OCI-LY7 (cell line): ENCODE measurements at regions of chrX and their contacts with region 1.

Region 1: GRCh38 chrX:76893930-76894329 is 466.4 kb downstream of the MAGEE1 start:
- DNase-seq: peak; percentile 1
- H3K4me3 ChIP-seq: no peak overlapping the region
- H3K27ac ChIP-seq: no peak overlapping the region
- H3K4me1 ChIP-seq: peaks cover 20% of the 10 kb centered on the region
- CTCF ChIP-seq: peak; percentile 34; the same call in 1 of the 2 replicates

Region 2: DNA sequence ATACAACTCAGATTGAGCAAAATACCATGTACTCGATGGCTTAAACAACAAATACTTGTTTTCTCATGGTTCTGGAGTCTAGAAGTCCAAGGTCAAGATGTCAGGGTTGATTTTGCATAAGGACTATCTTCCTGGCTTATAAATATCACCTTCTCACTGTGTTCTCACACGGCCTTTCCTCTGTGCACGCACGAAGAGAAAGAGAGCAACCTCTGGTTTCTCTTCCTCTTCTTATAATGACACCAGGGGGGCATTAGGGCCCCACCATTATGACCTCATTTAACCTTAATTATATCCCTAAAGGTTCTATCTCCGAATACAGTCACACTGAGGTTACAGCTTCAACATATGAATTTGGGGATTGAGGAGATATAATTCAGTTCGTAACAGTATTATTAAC is 37.6 kb after region 1 on chrX:
- CTCF ChIA-PET with region 1: no interaction called
- POLR2A ChIA-PET with region 1: no interaction called
- intact Hi-C with region 1: loop called (anchors 2 kb)
- DNase-seq: peak; percentile 53
- H3K4me3 ChIP-seq: peak overlapping the region; percentile 5
- H3K27ac ChIP-seq: peak overlapping the region; percentile 55
- H3K4me1 ChIP-seq: peaks cover 17% of the 10 kb centered on the region
- CTCF ChIP-seq: no peak

Region 3: GRCh38 chrX:77070202-77070918 is 176.4 kb after region 1 on chrX:
- CTCF ChIA-PET with region 1: no interaction called
- POLR2A ChIA-PET with region 1: no interaction called
- intact Hi-C with region 1: loop called (anchors 5 kb)
- DNase-seq: peak; percentile 22
- H3K4me3 ChIP-seq: peak overlapping the region; percentile 40
- H3K27ac ChIP-seq: no peak overlapping the region
- H3K4me1 ChIP-seq: peaks cover 6% of the 10 kb centered on the region
- CTCF ChIP-seq: no peak

Region 4: DNA sequence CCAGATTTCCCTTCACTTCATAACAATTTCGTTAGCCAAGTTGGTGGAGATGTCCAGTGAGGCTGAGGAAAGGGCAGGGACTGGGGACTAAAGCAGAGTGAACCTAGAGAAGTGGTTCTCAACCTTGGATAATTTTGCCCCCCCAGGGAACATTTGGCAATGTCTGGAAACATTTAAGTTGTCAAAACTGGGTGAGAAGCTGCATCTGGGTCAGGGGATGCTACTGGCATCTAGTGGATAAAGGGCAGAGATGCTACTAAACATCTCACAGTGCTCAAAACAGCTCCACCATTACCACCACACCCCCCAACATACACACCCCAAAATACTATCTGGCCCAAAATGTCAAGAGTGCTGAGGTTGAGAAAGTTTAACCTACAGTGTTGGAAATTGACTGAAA is 521.2 kb after region 1 on chrX:
- CTCF ChIA-PET with region 1: no interaction called
- POLR2A ChIA-PET with region 1: no interaction called
- intact Hi-C with region 1: loop called (anchors 10 kb)
- DNase-seq: no peak
- H3K4me3 ChIP-seq: no peak overlapping the region
- H3K27ac ChIP-seq: no peak overlapping the region
- H3K4me1 ChIP-seq: no peaks in the 10 kb centered on the region
- CTCF ChIP-seq: peak; percentile 41; the same call in 1 of the 2 replicates